Dendritic cell treated with granulocyte-macrophage colony-stimulating factor and Interleukin-4, amounts not matched to agents 40 ng/mL and 50 ng/mL, for 4 days (primary cell): ENCODE measurements at regions of chr17 and their contacts with region 1.

Region 1: GRCh38 chr17:7045909-7046724 is 2.2 kb upstream of the SLC16A11 start:
- H3K4me3 Mint-ChIP-seq: peak overlapping the region; percentile 70
- H3K27ac Mint-ChIP-seq: peak overlapping the region; percentile 70
- H3K4me1 Mint-ChIP-seq: peaks cover 43% of the 10 kb centered on the region
- H3K27me3 Mint-ChIP-seq: peaks cover 46% of the 10 kb centered on the region

Region 2: GRCh38 chr17:7004398-7005253 is 41.5 kb before region 1 on chr17:
- intact Hi-C with region 1: no loop called
- H3K4me3 Mint-ChIP-seq: no peak overlapping the region
- H3K27ac Mint-ChIP-seq: no peak overlapping the region
- H3K4me1 Mint-ChIP-seq: peaks cover 55% of the 10 kb centered on the region
- H3K27me3 Mint-ChIP-seq: no peaks in the 10 kb centered on the region

Region 3: GRCh38 chr17:7177196-7177953 is 131.3 kb after region 1 on chr17:
- intact Hi-C with region 1: loop called (anchors 2 kb)
- H3K4me3 Mint-ChIP-seq: peak overlapping the region; percentile 52
- H3K27ac Mint-ChIP-seq: no peak overlapping the region
- H3K4me1 Mint-ChIP-seq: peaks cover 8% of the 10 kb centered on the region
- H3K27me3 Mint-ChIP-seq: peaks cover 14% of the 10 kb centered on the region

Region 4: GRCh38 chr17:7296189-7296902 is 250.2 kb after region 1 on chr17:
- intact Hi-C with region 1: loop called (anchors 1 kb)
- H3K4me3 Mint-ChIP-seq: peak overlapping the region; percentile 52
- H3K27ac Mint-ChIP-seq: peak overlapping the region; percentile 57
- H3K4me1 Mint-ChIP-seq: peaks cover 30% of the 10 kb centered on the region
- H3K27me3 Mint-ChIP-seq: peaks cover 76% of the 10 kb centered on the region